OCI-LY7 (cell line): ENCODE measurements at regions of chr10 and their contacts with region 1.

Region 1: GRCh38 chr10:63268798-63269503 is 135.8 kb downstream of the NRBF2 start:
- DNase-seq: peak; percentile 95
- H3K4me3 ChIP-seq: peak overlapping the region; percentile 82
- H3K27ac ChIP-seq: peak overlapping the region; percentile 94
- H3K4me1 ChIP-seq: peaks cover 35% of the 10 kb centered on the region
- CTCF ChIP-seq: peak; percentile 55

Region 2: GRCh38 chr10:62456611-62457101 is 812.3 kb before region 1 on chr10:
- CTCF ChIA-PET with region 1: no interaction called
- POLR2A ChIA-PET with region 1: no interaction called
- intact Hi-C with region 1: loop called (anchors 5 kb)
- DNase-seq: peak; percentile 97
- H3K4me3 ChIP-seq: peak overlapping the region; percentile 14
- H3K27ac ChIP-seq: peak overlapping the region; percentile 80
- H3K4me1 ChIP-seq: peaks cover 49% of the 10 kb centered on the region
- CTCF ChIP-seq: no peak

Region 3: GRCh38 chr10:62637249-62638061 is 631.5 kb before region 1 on chr10:
- CTCF ChIA-PET with region 1: no interaction called
- POLR2A ChIA-PET with region 1: no interaction called
- intact Hi-C with region 1: loop called (anchors 10 kb)
- DNase-seq: peak; percentile 82
- H3K4me3 ChIP-seq: peak overlapping the region; percentile 63
- H3K27ac ChIP-seq: peak overlapping the region; percentile 90
- H3K4me1 ChIP-seq: peaks cover 87% of the 10 kb centered on the region
- CTCF ChIP-seq: no peak

Region 4: DNA sequence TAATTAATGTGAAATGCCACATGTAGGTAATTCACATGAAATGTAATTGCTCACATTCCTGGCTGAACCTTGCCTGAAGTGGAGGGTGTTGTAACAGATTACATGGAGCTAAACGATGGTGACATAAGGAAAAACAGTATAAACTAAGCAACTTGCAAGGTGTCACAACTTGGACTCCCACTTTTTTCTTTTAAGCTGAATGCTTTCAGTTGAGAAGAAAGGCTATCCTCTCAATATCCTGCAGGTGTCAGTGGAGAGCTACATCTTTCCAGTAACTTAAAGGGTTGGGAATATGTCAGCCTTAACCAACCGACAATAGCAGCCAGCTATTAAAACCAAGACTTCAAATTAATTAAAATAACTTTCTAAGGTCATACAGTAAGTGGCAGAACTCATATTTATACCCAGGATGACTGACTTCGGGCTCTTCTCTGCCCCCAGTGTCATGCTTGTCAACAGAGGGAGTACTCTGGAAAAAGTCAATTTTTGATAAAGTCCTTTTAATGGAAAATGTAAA is 102.2 kb before region 1 on chr10:
- CTCF ChIA-PET with region 1: no interaction called
- POLR2A ChIA-PET with region 1: no interaction called
- intact Hi-C with region 1: loop called (anchors 5 kb)
- DNase-seq: peak; percentile 78
- H3K4me3 ChIP-seq: no peak overlapping the region
- H3K27ac ChIP-seq: no peak overlapping the region
- H3K4me1 ChIP-seq: no peaks in the 10 kb centered on the region
- CTCF ChIP-seq: peak; percentile 94

Region 5: DNA sequence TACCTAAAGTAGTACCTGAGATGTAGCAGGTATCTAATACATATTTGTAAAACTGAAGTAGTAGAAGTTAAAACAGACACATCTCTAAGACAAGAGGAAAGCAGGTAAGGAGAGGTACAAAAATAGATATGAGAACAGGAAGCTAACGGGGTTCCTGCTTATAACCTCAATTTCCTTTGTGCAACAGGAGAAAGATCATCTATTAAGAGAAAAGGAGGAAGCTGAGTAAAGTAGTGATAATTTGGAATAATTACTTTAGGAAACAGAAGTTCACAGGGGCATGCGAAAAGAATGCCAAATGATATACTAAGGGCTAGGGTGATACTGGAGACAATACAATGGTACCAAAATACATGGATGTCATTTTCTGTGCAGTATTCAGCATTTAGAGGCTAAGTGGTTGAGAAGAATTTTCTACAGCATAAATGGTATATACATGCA is 27.1 kb before region 1 on chr10:
- CTCF ChIA-PET with region 1: interaction called, 3 read pairs
- POLR2A ChIA-PET with region 1: interaction called, 8 read pairs
- intact Hi-C with region 1: loop called (anchors 2 kb)
- DNase-seq: no peak
- H3K4me3 ChIP-seq: peak overlapping the region; percentile 36
- H3K27ac ChIP-seq: peak overlapping the region; percentile 46
- H3K4me1 ChIP-seq: peaks cover 75% of the 10 kb centered on the region
- CTCF ChIP-seq: no peak

Region 6: DNA sequence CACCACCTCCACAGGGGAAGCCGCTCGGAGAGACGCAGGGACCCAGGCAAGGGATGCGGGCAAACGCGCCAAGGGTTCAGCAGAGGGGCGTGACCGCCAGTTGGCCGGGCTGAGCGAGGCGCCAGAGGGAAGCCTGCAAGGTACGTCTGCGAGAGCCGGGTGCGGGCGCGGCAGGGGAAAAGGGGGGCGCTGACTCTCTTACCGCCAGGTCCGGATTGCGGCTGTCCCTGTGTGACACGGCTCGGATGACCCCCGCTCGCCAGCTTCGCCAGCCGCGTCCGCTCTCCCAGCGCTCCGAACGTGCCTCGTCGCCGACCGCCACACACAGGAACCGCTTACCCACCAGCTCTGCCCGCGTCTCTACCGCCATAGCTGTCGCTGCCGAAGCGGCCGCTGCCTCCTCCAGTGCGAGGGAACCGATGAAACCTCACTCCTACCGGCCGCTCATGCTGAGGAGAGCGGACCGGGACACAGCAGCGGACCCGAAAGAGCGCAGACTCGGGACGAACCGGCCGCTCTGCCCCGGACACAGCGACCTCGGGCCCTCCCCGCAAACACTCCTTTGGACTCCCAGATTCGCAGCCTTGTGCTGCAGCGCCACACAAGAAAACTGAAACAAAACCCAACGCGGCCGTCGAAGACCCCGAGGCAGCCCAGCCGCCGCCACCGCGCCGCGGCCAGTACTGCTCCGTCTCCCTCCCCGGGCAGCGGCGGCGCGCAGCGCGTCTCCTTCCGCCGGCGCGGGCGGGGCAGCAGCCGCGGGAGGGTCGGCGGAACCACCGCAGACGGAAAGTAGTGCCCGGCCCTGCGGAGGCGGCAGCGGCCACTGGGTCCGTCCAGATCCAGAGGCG is 196.6 kb after region 1 on chr10 and contains the start of gene JMJD1C:
- CTCF ChIA-PET with region 1: no interaction called
- POLR2A ChIA-PET with region 1: interaction called, 4 read pairs
- intact Hi-C with region 1: loop called (anchors 10 kb)
- DNase-seq: peak; percentile 61
- H3K4me3 ChIP-seq: peak within 1 kb of the TSS; percentile 73
- H3K27ac ChIP-seq: no peak within 1 kb of the TSS
- H3K4me1 ChIP-seq: peaks cover 7% of the 10 kb centered on the region
- CTCF ChIP-seq: peak; percentile 34; the same call in 1 of the 2 replicates
- total RNA-seq, gene JMJD1C: 99.2 and 104 TPM in 2 replicates